HepG2 (cell line): ENCODE measurements at regions of chr3 and their contacts with region 1.

Region 1: DNA sequence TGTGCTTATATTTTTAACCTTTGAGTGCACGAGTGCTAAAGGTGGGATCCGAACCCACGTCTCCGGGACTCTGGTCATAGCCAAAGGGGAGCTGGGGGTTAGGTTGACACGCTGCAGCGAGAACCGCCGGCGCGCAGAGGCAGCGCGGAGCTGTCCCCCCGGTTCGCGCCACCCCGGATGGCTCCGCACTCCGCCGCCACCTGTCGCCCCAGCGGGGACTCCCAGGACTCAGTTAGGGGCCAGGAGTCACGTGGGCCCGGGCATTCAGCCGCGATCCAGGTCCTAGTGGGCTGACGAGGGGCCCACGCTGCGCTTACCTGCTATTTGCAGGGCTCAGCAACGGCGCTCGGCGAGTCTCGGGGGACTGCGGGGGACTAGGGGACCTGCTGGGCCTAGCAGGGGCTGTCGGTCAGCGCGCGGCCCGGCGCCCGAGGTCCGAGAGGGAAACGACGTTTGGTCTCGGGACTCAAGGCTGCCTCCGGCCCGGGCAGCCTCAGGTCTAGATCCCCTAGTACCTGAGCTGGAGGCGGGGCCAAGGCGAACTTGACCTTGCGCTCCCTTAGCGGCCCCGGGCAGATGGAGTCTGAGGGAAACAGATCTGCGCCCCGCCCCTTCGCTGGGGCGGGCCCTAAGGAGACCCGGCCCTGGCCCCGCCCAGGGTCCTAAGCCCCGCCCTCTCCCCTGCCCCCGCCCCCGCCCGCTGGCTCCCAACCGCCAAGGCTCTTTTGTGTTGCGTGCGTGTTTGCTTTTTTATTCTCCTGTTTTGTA is at the start of gene NMNAT3:
- DNase-seq: peak; percentile 77
- ATAC-seq: peak; percentile 94
- H3K4me3 ChIP-seq: peak within 1 kb of the TSS; percentile 73 to 84 (median 73)
- H3K27ac ChIP-seq: peak within 1 kb of the TSS; percentile 48
- H3K4me1 ChIP-seq: peaks cover 9% of the 10 kb centered on the region
- H3K27me3 ChIP-seq: no peaks in the 10 kb centered on the region
- CTCF ChIP-seq: peak; percentile 56
- EP300 ChIP-seq: no peak
- POLR2A ChIP-seq: peak in 1 of 2 experiments; percentile 55; a peak in 1 of 4 replicates
- RAD21 ChIP-seq: 0 out of 2 replicates have a peak, but pooled peaks have one; percentile 41
- total RNA-seq, gene NMNAT3: 6.1 TPM in 2 replicates

Region 2: DNA sequence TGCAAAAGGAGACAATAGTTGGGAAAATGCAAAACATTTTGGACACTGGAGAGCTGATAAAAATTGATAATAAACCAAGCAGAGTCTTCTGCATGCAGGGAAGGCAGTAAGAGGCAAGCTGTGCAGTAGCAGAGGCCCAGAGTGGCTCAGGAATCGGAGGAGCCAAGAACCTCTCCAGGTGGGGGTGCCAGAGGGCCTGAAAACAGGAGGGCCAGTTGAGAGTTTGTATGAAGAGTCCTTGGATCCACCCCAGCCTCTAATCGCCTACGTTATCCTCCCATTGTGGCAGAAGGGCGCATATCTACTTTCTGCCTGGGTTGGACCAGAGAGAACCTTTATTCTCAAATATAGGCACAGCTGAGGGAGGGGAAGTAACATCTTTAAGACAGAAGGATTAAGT is 89.1 kb before region 1 on chr3:
- CTCF ChIA-PET with region 1: no interaction called
- POLR2A ChIA-PET with region 1: interaction called, 4 read pairs
- in situ Hi-C with region 1: no loop called
- intact Hi-C with region 1: loop called (anchors 2 kb)
- DNase-seq: peak; percentile 39
- ATAC-seq: peak; percentile 91
- H3K4me3 ChIP-seq: no peak overlapping the region
- H3K27ac ChIP-seq: no peak overlapping the region
- H3K4me1 ChIP-seq: no peaks in the 10 kb centered on the region
- H3K27me3 ChIP-seq: no peaks in the 10 kb centered on the region
- CTCF ChIP-seq: peak; percentile 59
- EP300 ChIP-seq: no peak
- POLR2A ChIP-seq: no peak
- RAD21 ChIP-seq: peak; percentile 47; the same call in 1 of the 2 replicates

Region 3: DNA sequence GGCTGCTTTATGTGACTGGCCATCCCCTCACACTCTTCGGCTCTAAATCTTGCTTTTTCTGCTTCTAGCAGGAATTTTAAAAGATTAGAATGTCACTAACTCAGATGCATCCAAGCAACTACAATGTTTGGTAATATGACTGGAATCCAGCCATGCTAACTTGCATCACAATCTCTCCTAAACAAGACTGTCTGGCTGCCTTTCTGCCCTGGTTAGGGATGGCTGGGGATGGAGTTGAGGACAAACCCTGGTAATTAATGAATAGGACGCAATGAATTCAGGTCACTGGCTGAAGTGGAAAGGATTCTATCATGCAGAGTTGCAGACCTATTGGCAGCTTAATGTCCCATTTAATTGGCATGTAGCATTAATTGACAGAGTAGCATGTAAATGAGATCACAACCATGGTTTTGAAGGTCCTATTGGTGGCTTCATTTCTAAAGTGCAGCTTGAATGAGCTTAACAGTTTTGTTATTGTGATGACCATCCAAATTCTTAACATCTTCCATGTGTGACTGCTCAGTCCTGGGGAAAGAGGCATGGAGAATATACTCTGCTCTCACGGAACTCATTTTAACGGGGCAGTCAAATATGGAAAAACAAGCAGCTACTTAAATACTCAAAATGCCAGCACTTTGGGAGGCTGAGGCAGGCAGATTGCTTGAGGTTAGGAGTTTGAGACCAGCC is 21.5 kb before region 1 on chr3:
- CTCF ChIA-PET with region 1: no interaction called
- POLR2A ChIA-PET with region 1: interaction called, 23 read pairs
- in situ Hi-C with region 1: no loop called
- intact Hi-C with region 1: loop called (anchors 1 kb)
- DNase-seq: peak; percentile 6
- ATAC-seq: no peak
- H3K4me3 ChIP-seq: no peak overlapping the region
- H3K27ac ChIP-seq: no peak overlapping the region
- H3K4me1 ChIP-seq: peaks cover 40% of the 10 kb centered on the region
- H3K27me3 ChIP-seq: no peaks in the 10 kb centered on the region
- CTCF ChIP-seq: no peak
- EP300 ChIP-seq: no peak
- POLR2A ChIP-seq: no peak
- RAD21 ChIP-seq: no peak

Region 4: DNA sequence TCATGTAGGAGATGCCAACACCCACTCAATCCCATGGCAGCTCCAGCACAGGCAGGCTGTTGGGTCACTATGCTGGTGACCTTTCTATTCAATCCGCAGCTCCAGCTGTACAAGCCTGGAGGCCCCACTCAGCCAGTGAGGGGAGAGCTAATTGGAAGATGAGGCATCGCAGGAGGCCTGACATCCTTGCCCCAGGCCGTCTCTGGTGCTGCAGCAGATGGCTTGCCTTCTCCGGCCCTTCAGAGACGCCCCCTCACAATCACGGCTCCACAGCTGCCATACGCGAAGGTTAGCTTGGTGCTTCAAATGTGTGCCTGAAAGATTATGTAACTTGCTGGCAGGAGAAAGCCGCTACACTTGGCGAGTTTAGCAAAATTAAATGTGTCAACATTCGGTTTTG is 153.2 kb after region 1 on chr3:
- CTCF ChIA-PET with region 1: no interaction called
- POLR2A ChIA-PET with region 1: no interaction called
- in situ Hi-C with region 1: no loop called
- intact Hi-C with region 1: no loop called
- DNase-seq: no peak
- ATAC-seq: no peak
- H3K4me3 ChIP-seq: no peak overlapping the region
- H3K27ac ChIP-seq: no peak overlapping the region
- H3K4me1 ChIP-seq: no peaks in the 10 kb centered on the region
- H3K27me3 ChIP-seq: peaks cover 0 to 2% of the 10 kb centered on the region in 2 experiments; a peak in 2 of 5 replicates
- CTCF ChIP-seq: no peak
- EP300 ChIP-seq: no peak
- POLR2A ChIP-seq: no peak
- RAD21 ChIP-seq: no peak

Region 5: DNA sequence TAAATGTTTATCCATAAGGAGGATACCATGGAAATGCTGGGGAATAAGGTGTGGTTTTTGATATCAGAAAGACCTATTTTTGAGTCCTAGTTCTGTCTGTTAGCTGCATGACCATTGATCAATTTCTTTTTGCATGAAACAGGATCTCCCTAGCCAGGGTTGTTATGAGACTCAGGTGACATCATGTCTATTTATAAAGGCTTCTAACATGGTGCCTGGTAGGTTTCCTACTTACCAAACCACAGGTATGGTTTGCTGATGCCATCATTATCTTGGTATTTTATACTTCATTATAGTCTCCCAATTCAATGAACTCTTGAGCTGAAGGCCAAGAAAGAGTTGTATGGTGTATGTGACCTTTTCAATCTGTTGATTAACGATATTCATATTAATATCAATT is 401.4 kb after region 1 on chr3:
- CTCF ChIA-PET with region 1: no interaction called
- POLR2A ChIA-PET with region 1: no interaction called
- in situ Hi-C with region 1: no loop called
- intact Hi-C with region 1: no loop called
- DNase-seq: no peak
- ATAC-seq: no peak
- H3K4me3 ChIP-seq: no peak overlapping the region
- H3K27ac ChIP-seq: no peak overlapping the region
- H3K4me1 ChIP-seq: no peaks in the 10 kb centered on the region
- H3K27me3 ChIP-seq: no peaks in the 10 kb centered on the region; a peak in 1 of 5 replicates
- CTCF ChIP-seq: no peak
- EP300 ChIP-seq: no peak
- POLR2A ChIP-seq: no peak
- RAD21 ChIP-seq: no peak